Left ventricle myocardium superior (tissue), 1 donor: ENCODE measurements at regions of chr6 and their contacts with region 1.

Region 1: GRCh38 chr6:46410334-46410953 is 80.8 kb downstream of the RCAN2 start:
- DNase-seq: no peak
- ATAC-seq: peak; percentile 25

Region 2: DNA sequence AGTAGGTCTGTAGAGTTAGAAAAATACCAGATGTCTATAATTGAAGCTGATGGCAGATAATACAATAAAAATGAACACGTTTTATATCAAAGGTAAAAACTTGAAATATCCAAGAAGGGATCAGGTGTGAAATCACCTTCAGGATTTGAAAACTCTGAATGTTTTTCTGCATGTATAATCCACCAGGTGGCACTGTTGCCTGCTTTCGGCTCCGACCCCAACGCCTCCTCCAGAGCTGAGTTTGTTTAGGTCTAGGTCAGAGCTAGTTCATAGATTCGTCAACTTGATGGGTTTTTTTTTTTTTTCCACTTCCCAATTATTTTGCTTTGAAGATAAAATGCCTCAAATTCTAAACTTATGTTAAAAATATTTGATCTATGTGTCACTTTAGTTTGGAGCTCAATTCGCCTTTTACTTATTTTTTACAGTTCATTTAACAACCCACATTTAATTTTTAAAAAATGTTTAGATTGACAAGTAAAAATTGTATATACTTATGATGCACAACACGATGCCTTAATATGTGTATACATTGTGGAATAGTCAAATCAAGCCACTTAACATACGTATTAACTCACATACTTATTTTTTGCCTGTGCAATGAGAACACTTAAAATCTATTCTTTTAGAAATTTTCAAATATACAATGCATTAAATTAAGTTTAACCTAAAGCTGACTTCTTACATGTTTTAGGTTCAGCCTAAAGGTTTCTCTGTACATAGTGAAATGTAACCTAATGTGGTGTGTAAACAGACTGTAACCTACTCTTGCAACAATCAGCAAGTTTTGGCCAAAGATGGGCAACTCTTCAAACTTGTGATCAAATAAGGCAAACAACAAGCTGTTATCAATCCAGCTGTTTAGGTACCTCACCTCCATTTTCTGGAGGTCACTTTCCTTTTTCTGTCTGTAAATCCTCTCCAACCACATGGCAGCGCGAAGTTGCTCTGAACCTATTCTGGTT is 320.0 kb before region 1 on chr6:
- intact Hi-C with region 1: loop called (anchors 2 kb)
- DNase-seq: peak; percentile 63
- ATAC-seq: peak; percentile 65

Region 3: GRCh38 chr6:46221222-46221793 is 189.1 kb before region 1 on chr6:
- intact Hi-C with region 1: loop called (anchors 1 kb)
- DNase-seq: no peak
- ATAC-seq: peak; percentile 63